AG04449 (cell line): ENCODE measurements at regions of chr9 and their contacts with region 1.

Region 1: DNA sequence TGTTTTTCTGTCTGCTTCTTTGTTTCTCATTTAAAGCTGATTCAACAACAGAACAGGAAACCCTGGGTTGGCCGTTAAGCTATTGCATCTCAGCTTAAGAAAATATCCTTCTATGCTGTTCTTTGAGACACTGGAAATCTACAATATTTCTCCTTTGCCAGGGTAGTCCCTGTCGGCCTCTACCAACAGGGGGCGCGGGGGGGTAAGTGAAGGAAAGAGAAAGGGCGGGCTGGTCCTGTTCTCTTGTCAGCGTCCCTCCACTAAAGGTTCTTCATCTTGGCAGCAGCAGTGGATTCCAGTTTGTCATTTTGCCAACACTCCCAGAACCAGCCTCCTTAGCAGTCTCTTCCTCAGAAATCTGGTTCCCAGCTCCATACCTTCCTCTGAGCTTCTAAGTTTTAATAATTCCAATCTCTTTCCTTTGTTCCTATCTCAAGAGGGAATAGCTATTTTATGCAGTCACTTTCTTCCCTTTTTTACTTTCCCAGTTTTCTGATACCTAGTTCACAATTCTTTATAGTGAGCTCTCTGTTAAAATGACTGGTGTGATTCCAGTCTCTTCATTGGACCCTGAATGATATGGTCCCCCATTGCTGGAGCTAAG is 222.3 kb downstream of the GLIS3 start:
- DNase-seq: no peak
- H3K4me3 ChIP-seq: no peak overlapping the region
- CTCF ChIP-seq: peak; percentile 67

Region 2: DNA sequence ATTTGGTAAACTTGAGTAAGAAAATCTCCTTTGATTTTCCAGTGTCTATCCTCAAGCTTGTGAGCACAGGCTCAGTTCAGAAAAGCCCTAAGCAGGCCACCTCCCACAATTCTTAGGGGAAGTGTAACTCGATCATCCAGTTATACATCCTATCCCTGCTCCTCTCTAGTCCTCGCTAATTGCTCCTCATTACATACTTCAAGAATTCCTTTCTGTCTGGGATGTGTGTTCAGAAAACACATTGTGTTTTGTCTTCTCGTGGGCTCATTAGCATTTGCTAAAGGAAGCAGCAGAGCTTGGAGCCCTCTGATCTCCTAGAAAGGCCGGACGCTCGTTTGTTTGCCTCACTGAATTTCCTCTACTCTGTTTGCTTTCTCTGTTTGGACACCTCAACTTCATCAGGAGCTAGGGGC is 283.6 kb before region 1 on chr9:
- CTCF ChIA-PET with region 1: no interaction called
- POLR2A ChIA-PET with region 1: no interaction called
- DNase-seq: no peak
- H3K4me3 ChIP-seq: no peak overlapping the region
- CTCF ChIP-seq: no peak

Region 3: GRCh38 chr9:4020038-4020754 is 57.4 kb before region 1 on chr9:
- CTCF ChIA-PET with region 1: no interaction called
- POLR2A ChIA-PET with region 1: no interaction called
- DNase-seq: no peak
- H3K4me3 ChIP-seq: no peak overlapping the region
- CTCF ChIP-seq: no peak

Region 4: DNA sequence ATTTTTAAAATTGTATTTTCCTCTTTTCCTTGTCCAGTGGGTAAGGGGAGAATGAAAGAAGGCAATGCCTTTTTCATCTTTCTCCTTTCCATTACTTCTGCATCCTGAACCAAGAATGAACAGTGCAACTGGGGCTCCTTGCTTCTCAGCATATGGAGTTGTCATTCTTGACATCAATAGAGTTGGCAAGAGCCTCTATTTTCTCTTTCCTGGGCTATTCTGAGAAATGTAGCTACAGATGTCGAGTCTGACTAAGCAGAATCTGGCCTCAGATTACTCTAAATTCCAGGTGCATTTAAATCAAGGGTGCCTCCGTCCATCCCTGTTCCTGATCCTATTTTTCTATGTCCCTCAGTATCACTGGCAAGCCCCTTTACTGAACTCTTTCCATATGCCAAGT is 22.6 kb before region 1 on chr9:
- CTCF ChIA-PET with region 1: interaction called, 12 read pairs
- POLR2A ChIA-PET with region 1: no interaction called
- DNase-seq: no peak
- H3K4me3 ChIP-seq: no peak overlapping the region
- CTCF ChIP-seq: no peak

Region 5: DNA sequence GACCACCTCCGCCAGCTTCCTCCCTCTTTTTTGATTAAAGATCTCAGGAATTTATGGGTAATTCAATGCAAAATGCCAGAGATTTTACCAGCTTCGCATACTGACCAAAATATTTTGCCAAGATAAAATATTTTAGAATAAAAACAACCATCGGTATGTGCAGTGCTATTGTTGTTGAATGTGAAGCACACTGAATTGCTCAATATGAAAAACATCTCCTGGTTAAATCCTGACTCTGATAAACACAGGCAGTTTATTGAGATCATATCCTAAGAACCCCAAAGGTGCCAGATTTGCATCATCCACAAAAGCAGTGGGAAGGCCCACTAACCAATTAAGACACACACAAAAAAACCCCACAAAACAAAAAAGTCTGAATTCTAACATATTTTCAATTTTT is 19.9 kb after region 1 on chr9:
- CTCF ChIA-PET with region 1: interaction called, 10 read pairs
- POLR2A ChIA-PET with region 1: no interaction called
- DNase-seq: no peak
- H3K4me3 ChIP-seq: no peak overlapping the region
- CTCF ChIP-seq: no peak

Region 6: GRCh38 chr9:4662108-4662988 is 584.7 kb after region 1 on chr9 and contains the start of gene PLPP6:
- CTCF ChIA-PET with region 1: no interaction called
- POLR2A ChIA-PET with region 1: no interaction called
- DNase-seq: no peak
- H3K4me3 ChIP-seq: peak within 1 kb of the TSS; percentile 79
- CTCF ChIP-seq: peak; percentile 77